K562 (cell line): ENCODE measurements at regions of chr5 and their contacts with region 1.

Region 1: GRCh38 chr5:43543434-43543833 is 13.4 kb downstream of the PAIP1 start:
- DNase-seq: no peak
- ATAC-seq: no peak
- H3K4me3 ChIP-seq: no peak overlapping the region
- H3K27ac ChIP-seq: no peak overlapping the region
- H3K4me1 ChIP-seq: no peaks in the 10 kb centered on the region
- H3K27me3 ChIP-seq: no peaks in the 10 kb centered on the region
- CTCF ChIP-seq: no peak
- EP300 ChIP-seq: no peak
- POLR2A ChIP-seq: no peak
- RAD21 ChIP-seq: no peak

Region 2: DNA sequence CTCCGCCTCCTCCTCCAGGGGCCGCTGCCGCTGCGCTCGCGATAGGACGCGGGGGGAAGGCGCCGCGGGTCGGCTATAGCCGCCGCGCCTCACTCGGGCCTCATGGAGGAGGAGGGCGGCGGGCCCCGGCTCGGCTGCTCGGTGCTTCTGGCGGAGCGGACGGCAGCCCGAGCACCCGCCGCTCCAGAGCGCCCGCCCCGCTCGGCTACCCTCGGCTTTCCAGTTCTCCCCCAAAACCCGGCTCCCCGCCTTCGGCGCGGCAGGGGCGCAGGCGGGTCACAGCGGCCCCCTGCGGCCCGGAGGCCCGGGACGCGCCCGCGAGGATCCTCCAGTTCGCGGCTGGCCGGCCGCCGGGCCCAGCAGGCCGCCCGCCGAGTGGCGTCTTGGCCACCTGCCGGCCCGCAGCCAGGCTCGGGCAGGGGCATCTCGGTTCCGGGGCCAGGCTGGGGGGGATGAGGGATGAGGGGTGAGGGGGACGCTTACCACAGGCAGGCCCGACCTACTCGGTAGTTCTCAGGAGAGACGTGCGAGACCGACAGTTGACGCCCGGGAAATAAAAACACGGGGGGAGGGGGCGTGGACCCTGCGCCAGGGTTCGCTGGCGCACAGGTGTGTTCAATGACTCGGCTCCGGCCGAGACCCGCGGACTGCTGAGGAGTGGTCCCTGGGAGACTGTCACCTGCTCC is 13.6 kb after region 1 on chr5 and contains the start of gene PAIP1:
- CTCF ChIA-PET with region 1: no interaction called
- POLR2A ChIA-PET with region 1: interaction called, 10 read pairs
- in situ Hi-C with region 1: no loop called
- intact Hi-C with region 1: no loop called
- DNase-seq: peak; percentile 92 to 93 (median 92)
- ATAC-seq: peak; percentile 90
- H3K4me3 ChIP-seq: peak within 1 kb of the TSS; percentile 78
- H3K27ac ChIP-seq: peak within 1 kb of the TSS; percentile 93
- H3K4me1 ChIP-seq: peaks cover 11 to 21% of the 10 kb centered on the region in 2 experiments
- H3K27me3 ChIP-seq: no peaks in the 10 kb centered on the region
- CTCF ChIP-seq: peak; percentile 61 to 79 (median 68); a peak in 5 of 6 replicates
- EP300 ChIP-seq: 0 out of 2 replicates have a peak, but pooled peaks have one; percentile 3
- POLR2A ChIP-seq: peak; percentile 88
- RAD21 ChIP-seq: peak in 1 of 2 experiments; percentile 14; a peak in 2 of 4 replicates
- polyA plus RNA-seq, gene PAIP1: 51.7 to 56.9 TPM